ENCODE measurements at regions of chr7 and their contacts with region 1.

Region 1: DNA sequence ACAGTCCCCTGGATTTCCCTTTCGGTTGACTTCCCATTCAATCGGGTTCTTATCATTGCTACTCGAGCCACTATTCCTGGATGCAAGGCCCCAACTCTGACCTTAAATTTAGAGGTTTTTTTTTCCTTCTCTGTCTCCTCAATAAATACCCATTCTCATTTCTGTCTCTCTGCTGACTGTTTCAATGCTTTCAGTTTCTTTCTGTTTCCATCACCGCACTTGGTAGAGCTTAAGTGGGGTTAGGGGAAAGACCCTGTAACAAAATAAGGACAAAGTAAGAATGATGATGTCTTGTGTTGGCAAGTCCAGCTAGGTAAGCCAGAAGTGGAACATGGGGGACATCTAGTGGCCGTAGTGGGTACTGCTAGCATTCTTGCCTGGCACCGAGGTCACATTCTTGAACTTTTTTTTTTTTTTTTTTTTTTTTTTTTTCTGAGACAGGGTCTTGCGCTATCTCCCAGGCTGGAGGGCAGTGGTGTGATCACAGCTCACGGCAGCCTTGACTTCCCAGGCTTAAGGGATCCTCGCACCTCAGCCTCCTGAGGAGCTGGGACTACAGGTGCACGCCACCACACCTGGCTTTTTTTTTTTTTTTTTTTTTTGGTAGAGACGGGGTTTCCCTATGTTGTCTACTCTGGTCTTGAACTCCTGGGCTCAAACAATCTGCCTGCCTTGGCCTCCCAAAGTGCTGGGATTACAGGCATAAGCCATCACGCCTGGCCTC is 40.3 kb downstream of the ZC3HC1 start:
- DNase-seq: peak; percentile 83
- H3K4me3 ChIP-seq: no peak overlapping the region
- H3K27ac ChIP-seq: peak overlapping the region; percentile 43 to 92; a peak in 3 of 4 replicates
- H3K4me1 ChIP-seq: peaks cover 12 to 20% of the 10 kb centered on the region in 2 experiments; a peak in 3 of 4 replicates
- H3K27me3 ChIP-seq: no peaks in the 10 kb centered on the region
- CTCF ChIP-seq: peak; percentile 98
- EP300 ChIP-seq: 0 out of 4 replicates have a peak, but pooled peaks of 1 of the 2 experiments have one; percentile 5
- RAD21 ChIP-seq: peak; percentile 98

Region 2: DNA sequence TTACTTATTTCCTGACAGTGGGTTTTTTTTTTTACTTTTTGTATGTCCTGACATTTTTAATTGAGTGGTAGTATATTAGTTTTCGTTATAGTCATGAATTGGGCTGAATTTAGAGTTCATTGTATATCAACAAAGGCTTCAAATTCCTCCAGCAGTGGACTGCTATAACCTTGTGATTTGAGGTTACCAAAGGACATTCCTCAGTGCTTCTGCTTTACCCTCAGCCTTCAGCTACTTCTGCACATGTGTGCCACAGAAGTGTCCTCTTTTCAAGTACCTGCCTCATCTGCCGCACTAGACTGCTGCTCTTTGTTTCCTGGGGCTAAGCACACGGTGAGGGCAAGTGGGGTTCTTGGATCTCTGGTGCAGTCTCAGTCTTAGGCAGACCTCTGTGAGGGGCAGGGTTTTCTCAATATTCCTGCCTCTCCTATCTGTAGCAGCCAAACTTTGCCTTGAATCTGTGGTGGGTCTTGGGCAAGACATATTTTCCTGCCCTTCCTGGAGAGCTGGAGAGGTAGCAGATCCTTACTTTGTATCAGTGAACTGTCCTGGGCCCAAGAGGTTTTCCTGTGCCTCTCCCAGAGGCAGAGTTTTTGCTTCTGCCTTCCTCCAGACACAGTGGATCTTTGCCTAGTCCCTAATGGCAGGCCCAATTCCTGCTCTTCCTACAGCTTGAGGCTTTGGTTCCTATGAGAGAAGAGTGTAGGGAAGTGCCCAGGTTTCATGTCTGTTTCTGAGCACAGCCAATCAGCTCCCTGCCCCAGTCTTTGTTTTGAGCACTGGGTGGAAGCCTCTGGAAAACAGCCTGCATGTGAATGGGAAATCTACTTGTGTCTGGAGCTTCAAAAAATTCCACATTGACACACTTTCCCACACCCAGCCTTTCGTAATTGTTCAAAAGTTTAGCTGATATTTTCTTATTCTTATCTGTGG is 615.6 kb before region 1 on chr7:
- CTCF ChIA-PET with region 1: no interaction called
- POLR2A ChIA-PET with region 1: no interaction called
- DNase-seq: no peak
- H3K4me3 ChIP-seq: no peak overlapping the region
- H3K27ac ChIP-seq: no peak overlapping the region
- H3K4me1 ChIP-seq: peaks cover 0 to 2% of the 10 kb centered on the region in 2 experiments; a peak in 2 of 4 replicates
- H3K27me3 ChIP-seq: no peaks in the 10 kb centered on the region
- CTCF ChIP-seq: no peak
- EP300 ChIP-seq: no peak
- RAD21 ChIP-seq: no peak

Region 3: DNA sequence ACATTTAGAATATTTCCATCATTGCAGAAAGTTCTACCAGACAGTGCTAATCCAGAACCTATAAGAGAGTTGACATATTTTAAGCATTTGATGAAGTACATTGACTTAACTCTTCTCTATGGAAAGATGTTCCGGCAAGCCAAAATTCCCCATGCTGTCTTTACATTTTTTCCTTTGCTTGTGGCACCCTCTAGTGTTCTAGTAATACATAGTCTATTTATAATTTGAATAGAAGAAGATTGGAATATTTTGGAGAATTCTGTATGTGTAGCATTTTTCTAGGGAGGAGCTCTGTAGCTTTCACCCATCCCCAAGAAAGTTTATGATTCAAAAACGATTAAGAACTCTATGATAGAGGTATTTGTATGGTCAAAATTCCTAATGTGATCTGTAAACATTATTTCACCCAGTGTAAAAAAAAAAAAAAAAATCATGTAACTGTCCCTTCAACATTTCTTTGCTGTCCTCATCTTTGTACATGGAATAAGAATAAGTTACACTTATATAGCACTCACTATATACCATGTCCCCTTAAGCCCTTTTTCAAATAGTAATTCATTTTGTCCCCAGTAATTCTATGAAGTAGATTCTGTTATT is 366.1 kb before region 1 on chr7:
- CTCF ChIA-PET with region 1: interaction called, 27 read pairs
- POLR2A ChIA-PET with region 1: interaction called, 3 read pairs
- DNase-seq: peak; percentile 53
- H3K4me3 ChIP-seq: no peak overlapping the region
- H3K27ac ChIP-seq: no peak overlapping the region
- H3K4me1 ChIP-seq: peaks cover 2 to 9% of the 10 kb centered on the region in 2 experiments; a peak in 2 of 4 replicates
- H3K27me3 ChIP-seq: no peaks in the 10 kb centered on the region
- CTCF ChIP-seq: peak; percentile 84
- EP300 ChIP-seq: no peak
- RAD21 ChIP-seq: peak; percentile 89

Region 4: DNA sequence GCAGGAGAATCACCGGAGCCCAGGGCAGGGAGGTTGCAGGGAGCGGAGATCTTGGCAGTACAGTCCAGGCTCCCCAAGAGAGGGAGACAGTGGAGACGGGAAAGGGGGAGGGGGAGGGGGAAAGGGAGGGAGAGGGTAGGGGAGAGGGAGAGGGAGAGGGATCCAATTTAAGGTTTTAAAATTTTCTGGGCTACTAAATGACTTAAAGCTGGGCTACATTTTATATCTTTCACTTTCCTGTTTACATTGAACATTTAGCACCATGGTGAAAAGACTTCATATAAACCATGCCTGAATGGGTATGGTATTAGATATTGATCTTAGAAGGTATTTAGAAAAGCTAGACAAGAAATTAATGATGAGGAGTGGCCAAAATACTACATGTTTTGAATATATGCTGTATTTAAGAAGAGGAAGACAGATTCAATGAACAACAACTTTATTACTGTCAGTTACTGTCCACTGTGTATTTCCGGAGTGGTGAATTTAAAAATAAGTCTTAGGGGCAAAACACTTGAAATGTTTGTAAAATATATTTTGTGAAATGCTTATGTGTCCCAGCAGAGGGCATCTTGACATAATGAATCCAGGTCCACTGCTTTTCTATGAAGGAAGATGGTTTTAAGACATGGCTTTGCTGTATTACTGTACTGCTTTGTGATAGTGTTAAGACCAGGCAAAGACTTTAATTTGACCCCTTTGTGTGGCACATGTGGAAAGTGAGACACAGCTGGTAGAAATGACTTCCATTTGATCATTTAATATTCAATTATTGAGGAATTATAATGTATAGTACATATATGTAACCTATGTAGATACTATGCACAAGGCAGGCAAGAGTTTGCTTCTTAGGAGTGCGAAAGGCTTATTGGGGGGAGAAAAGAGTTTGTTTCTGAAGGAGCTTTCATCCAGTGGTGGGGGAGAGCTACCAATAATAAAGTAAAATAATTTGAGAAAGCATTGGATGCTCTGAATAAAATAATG is 346.5 kb before region 1 on chr7:
- CTCF ChIA-PET with region 1: interaction called, 91 read pairs
- POLR2A ChIA-PET with region 1: no interaction called
- DNase-seq: peak; percentile 79
- H3K4me3 ChIP-seq: no peak overlapping the region
- H3K27ac ChIP-seq: peak overlapping the region; percentile 9 to 85; a peak in 3 of 4 replicates
- H3K4me1 ChIP-seq: peaks cover 5 to 9% of the 10 kb centered on the region in 2 experiments
- H3K27me3 ChIP-seq: no peaks in the 10 kb centered on the region
- CTCF ChIP-seq: peak; percentile 93
- EP300 ChIP-seq: no peak
- RAD21 ChIP-seq: peak; percentile 100

Region 5: DNA sequence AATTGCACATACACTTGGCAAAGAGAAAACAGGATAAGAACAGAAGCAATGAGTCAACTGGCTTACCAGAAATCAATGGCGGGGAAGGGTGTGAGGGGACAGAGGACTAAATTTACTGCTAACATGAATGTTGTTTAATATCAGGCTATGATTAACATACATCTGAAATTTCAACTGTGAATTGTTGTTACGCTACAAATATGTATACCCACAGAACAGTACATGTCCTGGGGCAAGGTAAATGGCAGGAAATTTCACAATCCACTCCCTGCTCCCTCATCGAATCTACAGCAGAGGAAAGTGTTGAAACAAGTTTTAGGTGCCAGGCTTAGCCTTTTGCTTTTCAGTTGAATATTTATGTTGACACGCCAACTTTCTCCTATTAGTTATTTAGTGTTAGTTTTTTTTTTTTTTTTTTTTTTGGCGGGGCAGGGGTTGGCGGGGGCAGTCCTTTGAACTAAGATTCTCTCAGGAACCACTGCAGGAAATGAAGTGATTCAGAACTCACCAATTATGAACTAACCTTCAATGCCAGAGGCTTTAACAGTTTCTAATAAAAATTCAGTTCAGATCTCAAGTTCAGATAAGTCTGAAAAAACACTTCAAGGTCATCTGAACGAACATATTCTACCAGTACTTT is 157.1 kb before region 1 on chr7:
- CTCF ChIA-PET with region 1: interaction called, 14 read pairs
- POLR2A ChIA-PET with region 1: no interaction called
- DNase-seq: no peak
- H3K4me3 ChIP-seq: peak overlapping the region; percentile 7 to 16; a peak in 3 of 4 replicates
- H3K27ac ChIP-seq: peak overlapping the region; percentile 98 to 99
- H3K4me1 ChIP-seq: peaks cover 59 to 63% of the 10 kb centered on the region in 2 experiments
- H3K27me3 ChIP-seq: no peaks in the 10 kb centered on the region
- CTCF ChIP-seq: no peak
- EP300 ChIP-seq: peak in 1 of 2 experiments; percentile 85; a peak in 2 of 4 replicates
- RAD21 ChIP-seq: no peak; the same call in 1 of the 2 replicates

Region 6: DNA sequence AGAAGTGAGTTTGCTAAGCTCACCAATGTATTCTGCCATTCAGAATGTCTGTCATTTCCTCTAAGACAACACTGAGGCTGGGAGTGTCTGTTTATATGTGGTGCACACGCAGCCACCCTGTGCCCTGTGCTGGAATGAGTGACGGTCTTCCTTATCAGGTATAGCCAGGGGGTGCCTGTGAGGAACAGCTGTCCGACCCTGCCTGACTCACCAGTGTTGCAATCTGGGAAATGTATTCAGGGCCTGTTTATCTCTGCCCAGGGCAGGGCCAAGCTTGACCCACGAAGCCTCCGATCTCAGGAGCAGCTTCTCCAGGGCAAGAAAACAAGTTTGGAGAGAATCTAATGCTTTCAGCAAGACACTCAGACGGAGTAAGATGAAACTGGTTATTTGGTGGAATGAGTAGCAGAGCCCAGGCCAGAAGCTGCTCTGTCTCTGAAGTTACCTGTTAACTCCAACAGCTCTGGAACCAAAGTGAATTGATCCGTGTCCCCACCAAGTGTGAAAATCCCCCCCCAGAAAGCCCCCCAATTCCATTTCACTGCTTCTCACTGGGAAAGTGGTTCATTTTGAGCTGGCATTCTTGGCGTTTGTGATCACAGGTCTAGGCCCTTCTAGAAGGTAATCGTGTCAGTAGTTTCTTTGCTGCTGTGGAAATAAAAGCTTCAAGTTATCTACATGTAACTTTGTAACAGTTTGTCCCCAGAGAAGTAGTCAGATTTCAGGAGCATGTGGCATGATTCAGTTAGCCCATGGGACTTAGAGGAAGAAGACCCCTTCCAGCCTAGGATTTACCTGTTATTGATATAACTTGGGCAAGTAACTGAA is 52.0 kb before region 1 on chr7:
- CTCF ChIA-PET with region 1: interaction called, 19 read pairs
- POLR2A ChIA-PET with region 1: no interaction called
- DNase-seq: peak; percentile 79
- H3K4me3 ChIP-seq: no peak overlapping the region
- H3K27ac ChIP-seq: peak overlapping the region in 1 of 2 experiments; percentile 3; a peak in 1 of 4 replicates
- H3K4me1 ChIP-seq: peaks cover 7 to 9% of the 10 kb centered on the region in 2 experiments; a peak in 2 of 4 replicates
- H3K27me3 ChIP-seq: no peaks in the 10 kb centered on the region
- CTCF ChIP-seq: no peak
- EP300 ChIP-seq: no peak
- RAD21 ChIP-seq: 0 out of 2 replicates have a peak, but pooled peaks have one; percentile 9

Region 7: DNA sequence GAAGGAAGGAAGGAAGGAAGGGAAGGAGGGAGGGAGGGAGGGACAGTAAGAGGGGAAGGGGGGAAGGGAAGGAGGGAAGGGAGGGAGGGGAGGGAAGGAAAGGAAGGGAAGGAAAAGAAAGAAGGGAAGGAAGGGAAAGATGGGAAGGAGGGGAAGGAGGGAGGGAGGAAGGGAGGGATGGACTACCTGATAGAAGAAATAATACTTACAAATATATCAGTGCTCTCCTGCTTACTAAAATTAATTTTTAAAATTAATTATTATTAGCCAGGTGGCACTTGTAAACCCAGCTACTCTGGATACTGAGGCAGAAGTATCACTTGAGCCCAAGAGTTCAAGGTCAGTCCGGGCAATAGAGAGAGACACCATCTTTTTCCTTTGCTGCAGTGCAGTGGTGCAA is 21.8 kb after region 1 on chr7:
- CTCF ChIA-PET with region 1: interaction called, 14 read pairs
- POLR2A ChIA-PET with region 1: no interaction called
- DNase-seq: no peak
- H3K4me3 ChIP-seq: no peak overlapping the region
- H3K27ac ChIP-seq: no peak overlapping the region
- H3K4me1 ChIP-seq: no peaks in the 10 kb centered on the region
- H3K27me3 ChIP-seq: no peaks in the 10 kb centered on the region
- CTCF ChIP-seq: no peak
- EP300 ChIP-seq: no peak
- RAD21 ChIP-seq: no peak

Measured in SK-N-SH (cell line).